Heart right ventricle (tissue), 16 donors: ENCODE measurements at regions of chr5 and their contacts with region 1.

Region 1: GRCh38 chr5:161134956-161135355 is 282.9 kb upstream of the ATP10B start:
- DNase-seq: no peak
- ATAC-seq: no peak
- H3K4me3 ChIP-seq: no peak overlapping the region
- H3K27ac ChIP-seq: no peak overlapping the region
- H3K4me1 ChIP-seq: no peaks in the 10 kb centered on the region
- H3K27me3 ChIP-seq: no peaks in the 10 kb centered on the region
- CTCF ChIP-seq: no peak

Region 2: DNA sequence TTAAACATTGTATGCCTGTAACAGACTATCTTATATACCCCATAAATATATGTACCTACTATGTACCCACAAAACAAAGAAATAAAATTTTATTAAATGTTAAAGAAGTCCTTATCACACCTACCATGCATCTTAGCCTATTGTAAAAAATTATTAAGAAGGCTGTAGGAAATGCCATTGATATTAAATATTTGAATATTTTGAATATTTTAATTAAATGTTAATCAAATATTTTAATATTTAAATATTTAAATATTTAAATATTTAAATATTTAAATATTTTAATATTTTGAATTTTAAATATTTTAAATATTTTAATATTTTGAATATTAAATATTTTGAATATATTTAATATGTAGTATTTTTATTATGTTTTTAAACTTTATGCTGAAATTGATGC is 48.6 kb after region 1 on chr5:
- intact Hi-C with region 1: loop called in 1 of 10 experiments (anchors 5 kb)
- DNase-seq: no peak
- ATAC-seq: no peak
- H3K4me3 ChIP-seq: no peak overlapping the region
- H3K27ac ChIP-seq: no peak overlapping the region
- H3K4me1 ChIP-seq: no peaks in the 10 kb centered on the region
- H3K27me3 ChIP-seq: no peaks in the 10 kb centered on the region
- CTCF ChIP-seq: no peak